ENCODE measurements at regions of chr4 and their contacts with region 1.

Region 1: GRCh38 chr4:10164877-10165283 is 48.3 kb upstream of the WDR1 start:
- DNase-seq: peak; percentile 28
- H3K4me3 Mint-ChIP-seq: no peak overlapping the region
- H3K27ac Mint-ChIP-seq: no peak overlapping the region
- H3K4me1 Mint-ChIP-seq: peaks cover 30% of the 10 kb centered on the region
- H3K27me3 Mint-ChIP-seq: no peaks in the 10 kb centered on the region

Region 2: GRCh38 chr4:10180927-10181782 is 16.3 kb after region 1 on chr4:
- CTCF ChIA-PET with region 1: interaction called, 17 read pairs
- POLR2A ChIA-PET with region 1: interaction called, 5 read pairs
- DNase-seq: peak; percentile 58
- H3K4me3 Mint-ChIP-seq: no peak overlapping the region
- H3K27ac Mint-ChIP-seq: peak overlapping the region; percentile 90
- H3K4me1 Mint-ChIP-seq: peaks cover 49% of the 10 kb centered on the region
- H3K27me3 Mint-ChIP-seq: no peaks in the 10 kb centered on the region

Region 3: GRCh38 chr4:10260777-10261176 is 95.9 kb after region 1 on chr4:
- CTCF ChIA-PET with region 1: no interaction called
- POLR2A ChIA-PET with region 1: no interaction called
- DNase-seq: no peak
- H3K4me3 Mint-ChIP-seq: no peak overlapping the region
- H3K27ac Mint-ChIP-seq: no peak overlapping the region
- H3K4me1 Mint-ChIP-seq: no peaks in the 10 kb centered on the region
- H3K27me3 Mint-ChIP-seq: peaks cover 3% of the 10 kb centered on the region

Region 4: GRCh38 chr4:10403633-10404445 is 239.0 kb after region 1 on chr4:
- CTCF ChIA-PET with region 1: interaction called, 61 read pairs
- POLR2A ChIA-PET with region 1: no interaction called
- DNase-seq: no peak
- H3K4me3 Mint-ChIP-seq: no peak overlapping the region
- H3K27ac Mint-ChIP-seq: no peak overlapping the region
- H3K4me1 Mint-ChIP-seq: no peaks in the 10 kb centered on the region
- H3K27me3 Mint-ChIP-seq: peaks cover 4% of the 10 kb centered on the region

Region 5: DNA sequence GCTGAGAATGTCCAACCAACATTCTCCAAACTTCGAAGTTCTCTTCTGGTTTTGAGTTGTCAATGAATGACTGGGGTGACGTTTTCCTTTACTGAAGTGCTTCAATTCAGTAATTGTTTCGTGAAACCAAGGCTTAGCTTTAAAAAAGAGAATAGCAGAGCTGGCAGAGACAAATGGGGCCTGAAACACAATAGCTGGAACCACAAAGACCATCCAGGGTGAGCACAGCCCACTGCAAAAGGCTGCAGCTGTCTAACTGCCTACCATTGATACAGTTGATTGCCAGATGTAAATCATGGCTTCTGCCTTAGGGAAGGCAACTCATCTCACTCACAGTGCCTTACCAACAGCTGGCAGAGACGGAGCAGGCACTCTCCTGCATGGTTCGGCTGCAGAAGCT is 371.0 kb after region 1 on chr4:
- CTCF ChIA-PET with region 1: interaction called, 43 read pairs
- POLR2A ChIA-PET with region 1: no interaction called
- DNase-seq: no peak
- H3K4me3 Mint-ChIP-seq: no peak overlapping the region
- H3K27ac Mint-ChIP-seq: no peak overlapping the region
- H3K4me1 Mint-ChIP-seq: no peaks in the 10 kb centered on the region
- H3K27me3 Mint-ChIP-seq: peaks cover 3% of the 10 kb centered on the region